ENCODE measurements at regions of chr20 and their contacts with region 1.

Region 1: GRCh38 chr20:53413186-53413631 is 180.4 kb downstream of the ZNF217 start:
- DNase-seq: peak; percentile 88
- CTCF ChIP-seq: peak; percentile 79

Region 2: GRCh38 chr20:53502820-53503219 is 89.6 kb after region 1 on chr20:
- CTCF ChIA-PET with region 1: no interaction called
- POLR2A ChIA-PET with region 1: no interaction called
- DNase-seq: no peak
- CTCF ChIP-seq: no peak

Region 3: DNA sequence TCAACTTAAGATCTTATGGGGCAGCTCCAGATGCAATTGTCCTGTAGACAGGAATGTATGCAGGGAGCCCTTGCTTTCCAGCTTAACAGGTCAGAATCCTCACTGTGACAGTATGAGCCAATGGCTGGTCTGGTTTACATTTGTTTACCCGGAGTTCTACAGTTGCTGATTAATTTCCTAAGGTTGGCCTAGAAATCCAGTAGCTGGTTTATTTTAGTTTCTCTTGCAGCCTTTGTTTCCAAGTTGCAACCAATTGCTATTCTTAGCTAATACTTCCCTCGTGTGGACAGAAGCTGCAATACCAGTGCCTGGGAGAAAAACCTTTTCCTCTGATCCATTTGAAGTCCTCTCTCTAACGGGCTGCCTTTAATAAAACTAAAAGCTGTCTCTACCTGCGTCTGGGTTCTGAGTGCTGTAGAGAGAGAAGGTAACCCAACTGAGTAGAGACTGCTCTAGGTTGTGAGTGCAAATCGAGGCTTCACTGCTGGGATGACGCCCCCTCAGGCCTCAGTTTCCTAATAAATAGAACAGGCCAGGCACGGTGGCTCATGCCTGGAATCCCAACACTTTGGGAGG is 134.5 kb after region 1 on chr20:
- CTCF ChIA-PET with region 1: interaction called, 12 read pairs
- POLR2A ChIA-PET with region 1: no interaction called
- DNase-seq: peak; percentile 66
- CTCF ChIP-seq: peak; percentile 71

Measured in GM10248 (cell line).